CD4-positive, alpha-beta memory T cell (primary cell): ENCODE measurements at regions of chr6 and their contacts with region 1.

Region 1: GRCh38 chr6:125888989-125889656 is 67.4 kb upstream of the HINT3 start:
- DNase-seq: peak in 4 of 5 donors; percentile 23 to 49 (median 34)
- H3K4me3 ChIP-seq: no peak overlapping the region
- H3K4me3 Mint-ChIP-seq: no peak overlapping the region
- H3K27ac ChIP-seq: no peak overlapping the region
- H3K27ac Mint-ChIP-seq: peak overlapping the region in 5 of 7 donors; percentile 29 to 71 (median 54)
- H3K4me1 ChIP-seq: no peaks in the 10 kb centered on the region
- H3K4me1 Mint-ChIP-seq: peaks cover 0 to 5% (median 3%) of the 10 kb centered on the region in 4 donors
- H3K27me3 ChIP-seq: no peaks in the 10 kb centered on the region
- H3K27me3 Mint-ChIP-seq: no peaks in the 10 kb centered on the region

Region 2: GRCh38 chr6:125839471-125839870 is 49.7 kb before region 1 on chr6:
- CTCF ChIA-PET with region 1: no interaction called
- POLR2A ChIA-PET with region 1: no interaction called
- intact Hi-C with region 1: no loop called
- DNase-seq: no peak
- H3K4me3 ChIP-seq: no peak overlapping the region
- H3K4me3 Mint-ChIP-seq: no peak overlapping the region
- H3K27ac ChIP-seq: no peak overlapping the region
- H3K27ac Mint-ChIP-seq: no peak overlapping the region
- H3K4me1 ChIP-seq: peaks cover 30% of the 10 kb centered on the region
- H3K4me1 Mint-ChIP-seq: peaks cover 25 to 45% (median 31%) of the 10 kb centered on the region in 4 donors
- H3K27me3 ChIP-seq: no peaks in the 10 kb centered on the region
- H3K27me3 Mint-ChIP-seq: no peaks in the 10 kb centered on the region

Region 3: GRCh38 chr6:125899726-125900182 is 10.6 kb after region 1 on chr6:
- CTCF ChIA-PET with region 1: interaction called, 22 read pairs
- POLR2A ChIA-PET with region 1: no interaction called
- intact Hi-C with region 1: no loop called
- DNase-seq: no peak
- H3K4me3 ChIP-seq: no peak overlapping the region
- H3K4me3 Mint-ChIP-seq: no peak overlapping the region
- H3K27ac ChIP-seq: no peak overlapping the region
- H3K27ac Mint-ChIP-seq: peak overlapping the region in 1 of 7 donors; percentile 1
- H3K4me1 ChIP-seq: peaks cover 10% of the 10 kb centered on the region
- H3K4me1 Mint-ChIP-seq: peaks cover 7 to 25% (median 12%) of the 10 kb centered on the region in 4 donors
- H3K27me3 ChIP-seq: no peaks in the 10 kb centered on the region
- H3K27me3 Mint-ChIP-seq: no peaks in the 10 kb centered on the region

Region 4: DNA sequence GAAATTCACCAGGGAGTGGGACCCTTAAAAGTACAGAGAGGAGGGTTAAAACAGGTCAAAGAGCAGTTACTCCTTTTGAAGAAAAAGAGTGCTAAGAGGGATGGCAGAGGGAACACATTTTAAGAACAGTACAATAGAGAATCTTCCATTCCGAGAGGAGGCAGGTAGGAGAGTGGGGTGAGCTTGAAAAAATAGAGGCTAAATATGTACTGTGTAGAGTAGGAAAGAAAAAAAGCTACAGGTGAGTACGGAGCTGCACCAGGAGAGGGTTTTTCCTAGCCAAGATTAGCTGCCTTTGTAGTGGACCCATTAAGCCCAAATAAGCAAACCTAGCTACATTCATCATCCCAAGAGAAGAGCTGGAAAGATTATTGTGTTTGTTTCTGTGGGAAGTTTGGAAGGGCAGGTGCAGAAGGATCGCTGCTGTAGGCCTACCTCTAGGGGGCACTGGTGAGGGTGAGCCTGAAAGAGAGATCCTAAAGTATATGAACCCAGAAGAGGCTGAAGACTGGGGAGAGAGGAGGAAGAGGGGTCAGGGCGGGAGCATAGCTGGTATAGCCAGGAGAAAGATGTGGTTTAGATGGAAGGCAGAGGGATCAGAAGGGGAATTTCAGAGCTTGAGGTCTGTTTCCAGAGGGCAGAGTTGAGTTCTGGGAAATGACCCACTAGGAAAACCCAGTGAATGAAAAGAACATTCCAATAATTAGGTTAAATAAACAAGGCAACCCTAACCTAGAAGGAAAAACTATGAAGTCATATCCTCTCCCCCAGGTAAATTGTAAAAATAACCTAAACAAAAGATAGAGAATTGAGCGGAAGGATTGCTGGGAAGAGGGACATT is 17.3 kb after region 1 on chr6:
- CTCF ChIA-PET with region 1: interaction called, 22 read pairs
- POLR2A ChIA-PET with region 1: no interaction called
- intact Hi-C with region 1: no loop called
- DNase-seq: peak; percentile 22 to 44 (median 39)
- H3K4me3 ChIP-seq: no peak overlapping the region
- H3K4me3 Mint-ChIP-seq: peak overlapping the region in 1 of 8 donors; percentile 21
- H3K27ac ChIP-seq: no peak overlapping the region
- H3K27ac Mint-ChIP-seq: peak overlapping the region; percentile 9 to 86 (median 68)
- H3K4me1 ChIP-seq: peaks cover 11% of the 10 kb centered on the region
- H3K4me1 Mint-ChIP-seq: peaks cover 16 to 33% (median 21%) of the 10 kb centered on the region in 4 donors
- H3K27me3 ChIP-seq: no peaks in the 10 kb centered on the region
- H3K27me3 Mint-ChIP-seq: no peaks in the 10 kb centered on the region